ENCODE measurements at regions of chr17 and their contacts with region 1.

Region 1: GRCh38 chr17:79915850-79916430 is 76.7 kb upstream of the CBX4 start:
- DNase-seq: peak; percentile 99
- H3K4me3 ChIP-seq: no peak overlapping the region
- H3K4me3 Mint-ChIP-seq: peak overlapping the region; percentile 52
- H3K27ac Mint-ChIP-seq: peak overlapping the region; percentile 98
- H3K4me1 ChIP-seq: peaks cover 61% of the 10 kb centered on the region
- H3K4me1 Mint-ChIP-seq: peaks cover 22% of the 10 kb centered on the region
- H3K27me3 ChIP-seq: no peaks in the 10 kb centered on the region
- H3K27me3 Mint-ChIP-seq: no peaks in the 10 kb centered on the region
- CTCF ChIP-seq: peak; percentile 36 to 66

Region 2: GRCh38 chr17:79728226-79728907 is 187.6 kb before region 1 on chr17:
- CTCF ChIA-PET with region 1: no interaction called
- POLR2A ChIA-PET with region 1: no interaction called
- intact Hi-C with region 1: no loop called
- DNase-seq: peak; percentile 89 to 90
- H3K4me3 ChIP-seq: no peak overlapping the region
- H3K4me3 Mint-ChIP-seq: peak overlapping the region; percentile 20
- H3K27ac Mint-ChIP-seq: peak overlapping the region; percentile 58
- H3K4me1 ChIP-seq: peaks cover 4% of the 10 kb centered on the region; the same call in 1 of the 2 replicates
- H3K4me1 Mint-ChIP-seq: peaks cover 16% of the 10 kb centered on the region
- H3K27me3 ChIP-seq: no peaks in the 10 kb centered on the region
- H3K27me3 Mint-ChIP-seq: no peaks in the 10 kb centered on the region
- CTCF ChIP-seq: no peak

Region 3: GRCh38 chr17:79844869-79845600 is 70.9 kb before region 1 on chr17:
- CTCF ChIA-PET with region 1: interaction called, 87 read pairs
- POLR2A ChIA-PET with region 1: interaction called, 174 read pairs
- intact Hi-C with region 1: loop called (anchors 1 kb)
- DNase-seq: peak; percentile 82 to 87
- H3K4me3 ChIP-seq: peak overlapping the region; percentile 68
- H3K4me3 Mint-ChIP-seq: peak overlapping the region; percentile 80
- H3K27ac Mint-ChIP-seq: peak overlapping the region; percentile 92
- H3K4me1 ChIP-seq: peaks cover 41% of the 10 kb centered on the region
- H3K4me1 Mint-ChIP-seq: peaks cover 12% of the 10 kb centered on the region
- H3K27me3 ChIP-seq: no peaks in the 10 kb centered on the region
- H3K27me3 Mint-ChIP-seq: no peaks in the 10 kb centered on the region
- CTCF ChIP-seq: peak; percentile 89

Region 4: DNA sequence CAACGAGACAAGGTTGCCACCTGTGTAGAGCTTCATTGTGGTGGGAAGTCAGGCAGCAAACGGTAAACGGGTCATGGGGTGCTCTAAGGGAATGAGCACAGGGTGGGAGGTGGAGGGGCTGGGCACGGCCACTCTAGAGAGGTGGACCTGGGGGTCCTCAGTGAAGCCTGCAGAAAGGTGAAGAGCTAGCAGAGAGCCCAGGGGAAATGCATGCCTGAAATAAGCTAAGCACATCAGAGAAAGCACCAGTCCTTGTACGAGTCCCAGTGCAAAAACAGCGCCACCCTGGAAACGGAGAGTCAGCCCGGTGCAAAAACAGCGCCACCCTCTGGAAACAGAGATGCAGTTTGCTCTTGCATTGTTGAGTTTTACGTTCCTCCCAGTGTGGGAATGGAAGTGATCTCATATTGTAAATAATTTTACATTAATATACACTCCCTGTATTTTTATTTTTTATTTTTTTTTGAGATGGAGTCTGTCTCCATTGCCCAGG is 54.7 kb after region 1 on chr17:
- CTCF ChIA-PET with region 1: interaction called, 4 read pairs
- POLR2A ChIA-PET with region 1: interaction called, 4 read pairs
- intact Hi-C with region 1: loop called (anchors 5 kb)
- DNase-seq: peak in 1 of 2 experiments; percentile 57
- H3K4me3 ChIP-seq: no peak overlapping the region
- H3K4me3 Mint-ChIP-seq: no peak overlapping the region
- H3K27ac Mint-ChIP-seq: no peak overlapping the region
- H3K4me1 ChIP-seq: peaks cover 6% of the 10 kb centered on the region; the same call in 1 of the 2 replicates
- H3K4me1 Mint-ChIP-seq: peaks cover 7% of the 10 kb centered on the region
- H3K27me3 ChIP-seq: no peaks in the 10 kb centered on the region
- H3K27me3 Mint-ChIP-seq: no peaks in the 10 kb centered on the region
- CTCF ChIP-seq: peak; percentile 49 to 72

Measured in Caco-2 (cell line).